BJ (cell line): ENCODE measurements at regions of chr3 and their contacts with region 1.

Region 1: GRCh38 chr3:99753268-99753975 is 64.2 kb upstream of the CMSS1 start:
- DNase-seq: no peak
- H3K4me3 ChIP-seq: no peak overlapping the region
- H3K27me3 ChIP-seq: no peaks in the 10 kb centered on the region
- CTCF ChIP-seq: peak; percentile 70

Region 2: DNA sequence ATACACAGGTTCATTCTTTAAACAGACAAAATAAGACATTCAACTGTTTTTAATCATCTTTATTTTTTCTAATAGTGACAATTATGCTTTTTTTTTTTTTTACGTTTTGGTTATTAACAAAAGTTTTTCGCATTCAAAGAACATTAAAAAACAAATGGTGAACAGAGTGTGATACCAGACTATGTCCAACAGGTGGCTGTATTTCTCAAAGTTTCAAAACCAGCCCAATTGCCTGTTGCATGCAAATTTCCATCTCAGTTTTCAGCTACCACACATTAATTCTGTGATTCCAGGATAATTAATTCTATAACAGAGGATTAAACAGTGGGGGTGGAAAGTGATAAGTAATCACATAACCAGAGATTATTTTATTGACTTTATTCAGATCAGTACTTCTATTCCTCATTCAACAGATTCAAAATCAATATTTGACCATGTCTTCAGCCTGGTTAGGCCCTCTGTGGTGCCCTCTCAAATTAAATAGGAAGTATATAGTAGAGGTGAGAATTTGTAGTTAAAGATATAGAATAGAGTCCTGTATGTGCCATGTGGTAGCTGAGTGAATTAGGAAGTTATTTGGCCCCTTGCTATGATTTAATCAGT is 729.7 kb before region 1 on chr3:
- CTCF ChIA-PET with region 1: interaction called, 10 read pairs
- POLR2A ChIA-PET with region 1: no interaction called
- DNase-seq: peak; percentile 4
- H3K4me3 ChIP-seq: no peak overlapping the region
- H3K27me3 ChIP-seq: no peaks in the 10 kb centered on the region
- CTCF ChIP-seq: peak; percentile 58

Region 3: DNA sequence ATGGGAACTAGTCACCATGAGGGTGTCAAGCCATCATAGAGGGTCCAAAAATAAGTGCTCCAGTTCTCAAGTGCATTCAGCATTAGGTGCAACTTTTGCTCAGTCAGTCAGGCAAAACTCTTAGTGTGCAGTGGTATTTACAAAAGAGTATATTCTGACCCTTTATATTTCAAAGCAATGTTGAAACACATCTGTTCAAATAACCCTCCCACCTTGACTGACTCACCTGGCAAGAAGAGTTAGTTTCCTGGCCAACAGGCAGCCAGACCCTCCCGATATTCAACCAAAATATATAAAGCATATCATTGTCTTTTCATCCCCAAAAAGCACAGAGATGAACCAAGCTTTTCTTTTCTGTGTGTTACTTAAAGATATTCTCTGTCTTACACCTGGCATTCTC is 122.6 kb before region 1 on chr3:
- CTCF ChIA-PET with region 1: no interaction called
- POLR2A ChIA-PET with region 1: no interaction called
- DNase-seq: no peak
- H3K4me3 ChIP-seq: no peak overlapping the region
- H3K27me3 ChIP-seq: no peaks in the 10 kb centered on the region
- CTCF ChIP-seq: no peak

Region 4: DNA sequence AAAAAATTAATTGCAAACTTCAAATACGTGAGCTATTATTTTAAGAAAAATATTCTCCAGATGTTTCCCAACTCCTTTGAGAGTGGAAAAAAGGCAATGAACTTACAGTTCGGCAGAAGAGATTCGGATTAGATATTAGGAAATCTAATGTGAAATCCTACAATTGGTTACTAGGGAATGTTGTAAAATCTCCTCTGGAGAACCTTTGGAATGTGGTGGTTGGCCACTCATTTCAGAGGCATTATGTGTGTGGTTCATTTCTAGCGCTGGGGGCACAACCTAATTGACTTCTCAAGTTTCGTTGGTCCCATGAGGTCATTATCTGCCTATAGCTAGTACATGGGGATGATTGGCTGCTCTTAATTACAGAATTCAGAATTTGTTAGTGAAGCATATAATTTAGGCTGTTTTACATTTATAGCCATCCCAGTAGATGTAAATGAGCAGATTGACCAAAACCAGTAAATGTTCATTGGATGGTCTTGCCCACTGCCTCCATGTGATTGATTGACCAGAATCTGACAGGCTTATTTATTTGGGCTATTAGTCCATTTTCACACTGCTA is 29.7 kb after region 1 on chr3:
- CTCF ChIA-PET with region 1: interaction called, 16 read pairs
- POLR2A ChIA-PET with region 1: no interaction called
- DNase-seq: peak; percentile 91
- H3K4me3 ChIP-seq: no peak overlapping the region
- H3K27me3 ChIP-seq: no peaks in the 10 kb centered on the region
- CTCF ChIP-seq: no peak

Region 5: GRCh38 chr3:99884484-99884883 is 131.1 kb after region 1 on chr3:
- CTCF ChIA-PET with region 1: no interaction called
- POLR2A ChIA-PET with region 1: no interaction called
- DNase-seq: no peak
- H3K4me3 ChIP-seq: no peak overlapping the region
- H3K27me3 ChIP-seq: no peaks in the 10 kb centered on the region
- CTCF ChIP-seq: no peak